Dendritic cell treated with granulocyte-macrophage colony-stimulating factor and Interleukin-4, amounts not matched to agents 40 ng/mL and 50 ng/mL, for 4 days (primary cell): ENCODE measurements at regions of chr3 and their contacts with region 1.

Region 1: DNA sequence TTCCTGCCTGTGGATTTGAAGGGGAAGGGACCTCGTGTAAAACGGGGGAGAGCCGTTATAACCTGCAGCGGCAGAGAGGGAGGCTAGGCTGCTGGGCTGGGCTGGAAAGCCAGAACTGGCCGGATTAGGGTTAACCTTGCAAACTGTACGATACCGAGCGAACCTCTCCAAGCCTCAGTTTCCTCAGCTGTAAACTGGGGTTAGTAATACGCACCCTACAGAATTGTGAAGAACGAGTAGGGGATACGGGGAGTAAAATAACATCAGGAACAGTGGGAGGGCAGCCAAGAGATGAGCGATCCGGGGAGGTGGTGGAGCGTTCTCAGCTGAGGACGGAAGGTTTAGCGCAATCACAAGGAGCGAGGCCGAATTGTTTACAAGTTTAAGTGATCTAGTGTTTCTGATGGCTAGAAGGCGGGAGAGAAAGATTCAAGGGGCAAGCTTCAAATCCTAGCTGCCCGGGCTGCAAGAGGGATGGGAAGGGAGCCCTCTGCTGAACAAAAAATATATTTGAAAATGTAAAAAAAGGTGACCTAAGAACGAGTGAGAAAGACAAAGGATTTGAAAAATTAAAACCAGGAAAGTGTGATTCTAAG is 768 bp upstream of the SEMA5B start:
- H3K4me3 Mint-ChIP-seq: peak overlapping the region; percentile 67
- H3K27ac Mint-ChIP-seq: no peak overlapping the region
- H3K4me1 Mint-ChIP-seq: peaks cover 22% of the 10 kb centered on the region
- H3K27me3 Mint-ChIP-seq: peaks cover 62% of the 10 kb centered on the region

Region 2: GRCh38 chr3:122754929-122755328 is 273.4 kb before region 1 on chr3:
- intact Hi-C with region 1: loop called (anchors 5 kb)
- H3K4me3 Mint-ChIP-seq: no peak overlapping the region
- H3K27ac Mint-ChIP-seq: no peak overlapping the region
- H3K4me1 Mint-ChIP-seq: peaks cover 37% of the 10 kb centered on the region
- H3K27me3 Mint-ChIP-seq: no peaks in the 10 kb centered on the region

Region 3: DNA sequence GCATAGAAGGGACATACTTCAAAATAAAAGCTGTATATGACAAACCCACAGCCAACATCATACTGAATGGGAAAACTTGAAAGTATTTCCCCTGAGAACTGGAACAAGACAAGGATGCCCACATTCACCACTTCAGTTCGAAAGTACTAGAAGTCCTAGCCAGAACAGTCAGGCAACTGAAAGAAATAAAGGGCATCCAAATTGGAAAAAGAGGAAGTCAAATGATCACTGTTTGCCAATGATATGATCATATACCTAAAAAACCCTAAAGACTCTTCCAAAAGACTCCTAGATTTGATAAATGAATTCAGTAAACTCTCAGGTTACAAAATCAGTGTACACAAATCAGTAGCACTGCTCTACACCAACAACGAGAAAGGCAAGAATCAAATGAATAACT is 192.7 kb before region 1 on chr3:
- intact Hi-C with region 1: no loop called
- H3K4me3 Mint-ChIP-seq: no peak overlapping the region
- H3K27ac Mint-ChIP-seq: no peak overlapping the region
- H3K4me1 Mint-ChIP-seq: no peaks in the 10 kb centered on the region
- H3K27me3 Mint-ChIP-seq: no peaks in the 10 kb centered on the region

Region 4: DNA sequence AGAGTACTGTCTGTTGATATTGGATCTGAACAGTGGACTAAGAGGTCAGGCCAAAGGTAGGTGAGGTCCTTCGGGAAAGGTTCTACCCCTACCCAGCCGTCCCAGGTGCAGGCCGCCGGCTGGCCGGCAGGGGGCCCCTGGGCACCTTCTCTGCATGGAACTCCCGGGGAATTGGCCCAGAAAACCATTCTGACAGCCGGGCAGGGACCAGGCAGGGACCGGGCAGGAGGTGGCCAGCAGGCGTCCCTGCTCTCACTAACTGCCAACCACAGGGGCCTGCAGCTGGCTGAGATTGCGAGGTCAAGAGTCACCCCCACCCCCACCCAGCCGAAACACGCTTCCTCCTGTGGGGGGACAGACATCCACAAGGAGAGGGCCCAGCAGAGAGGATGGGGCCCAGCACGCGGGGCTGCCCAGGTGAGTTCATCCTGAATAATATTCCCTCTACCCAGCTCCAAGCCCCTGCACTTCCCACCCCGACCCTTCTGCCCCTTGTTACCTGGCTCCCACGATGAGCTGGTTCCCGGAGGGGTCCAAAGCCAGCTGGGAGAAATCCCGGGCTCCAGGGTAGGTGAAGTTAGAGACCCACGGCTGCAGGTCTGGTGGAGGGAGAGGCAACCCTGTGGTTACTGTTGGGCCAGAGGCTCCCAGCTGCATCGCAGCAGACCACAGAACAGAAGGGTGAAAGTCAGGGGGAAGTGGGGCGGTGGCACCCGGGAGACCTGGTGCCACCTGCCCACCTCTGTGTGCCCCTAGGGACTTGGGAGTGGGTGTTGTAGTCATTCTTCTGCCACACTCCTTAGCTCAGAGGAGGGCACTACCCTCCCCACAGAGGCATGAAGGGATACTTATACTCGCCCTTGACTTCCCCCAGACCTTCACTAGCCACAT is 85.1 kb before region 1 on chr3:
- intact Hi-C with region 1: loop called (anchors 5 kb)
- H3K4me3 Mint-ChIP-seq: no peak overlapping the region
- H3K27ac Mint-ChIP-seq: no peak overlapping the region
- H3K4me1 Mint-ChIP-seq: peaks cover 50% of the 10 kb centered on the region
- H3K27me3 Mint-ChIP-seq: peaks cover 11% of the 10 kb centered on the region

Region 5: GRCh38 chr3:123015557-123015956 is 12.8 kb before region 1 on chr3:
- intact Hi-C with region 1: no loop called
- H3K4me3 Mint-ChIP-seq: no peak overlapping the region
- H3K27ac Mint-ChIP-seq: no peak overlapping the region
- H3K4me1 Mint-ChIP-seq: no peaks in the 10 kb centered on the region
- H3K27me3 Mint-ChIP-seq: peaks cover 36% of the 10 kb centered on the region

Region 6: GRCh38 chr3:123239756-123240155 is 211.4 kb after region 1 on chr3:
- intact Hi-C with region 1: no loop called
- H3K4me3 Mint-ChIP-seq: no peak overlapping the region
- H3K27ac Mint-ChIP-seq: no peak overlapping the region
- H3K4me1 Mint-ChIP-seq: no peaks in the 10 kb centered on the region
- H3K27me3 Mint-ChIP-seq: no peaks in the 10 kb centered on the region